Activated CD4-positive, alpha-beta T cell treated with anti-CD3 and anti-CD28 coated beads, Interleukin-2, amount 10 ng/mL, durations not matched to agents 24 days and 14 days (primary cell): ENCODE measurements at regions of chr11 and their contacts with region 1.

Region 1: DNA sequence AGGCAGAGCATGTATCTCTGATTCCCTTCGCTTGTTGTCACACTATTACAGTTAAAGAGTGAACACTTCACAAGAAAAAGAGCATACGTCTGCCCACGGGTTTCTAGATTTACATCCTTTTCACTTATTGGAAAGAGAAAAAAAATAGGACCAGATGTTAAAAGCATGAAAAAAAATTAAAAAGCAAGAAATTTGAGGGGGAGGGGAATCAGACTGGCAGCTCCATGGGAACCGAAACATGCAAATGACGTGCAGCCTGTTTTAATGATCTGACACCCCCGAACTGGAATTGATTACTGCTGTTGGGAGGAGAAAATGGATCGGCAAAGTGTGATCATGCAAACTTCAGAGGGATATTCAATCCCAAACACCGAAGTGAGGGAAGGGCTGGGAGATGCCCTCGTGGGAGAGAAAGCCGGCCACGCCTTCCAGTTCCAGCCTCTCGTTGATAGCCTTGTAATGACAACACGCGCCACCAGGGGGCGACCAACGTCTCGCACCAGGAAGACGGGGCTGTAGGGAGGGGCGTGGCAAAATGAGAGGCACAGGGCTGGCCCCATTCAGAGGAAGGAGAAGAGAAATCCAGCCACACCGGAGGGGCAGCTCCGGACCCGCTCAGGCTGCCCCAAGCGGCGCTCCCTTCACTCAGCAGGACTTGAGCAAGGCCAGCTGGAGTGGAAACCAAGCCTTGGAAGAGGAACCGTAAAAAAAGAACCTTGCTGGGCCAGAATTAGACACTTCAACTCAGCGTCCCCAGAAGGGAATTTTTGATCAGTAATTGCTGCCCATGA is 53.8 kb upstream of the SYT13 start:
- DNase-seq: peak; percentile 97
- H3K4me3 Mint-ChIP-seq: peak overlapping the region; percentile 78
- H3K27ac Mint-ChIP-seq: no peak overlapping the region
- H3K4me1 Mint-ChIP-seq: peaks cover 9% of the 10 kb centered on the region
- H3K27me3 Mint-ChIP-seq: peaks cover 28% of the 10 kb centered on the region

Region 2: DNA sequence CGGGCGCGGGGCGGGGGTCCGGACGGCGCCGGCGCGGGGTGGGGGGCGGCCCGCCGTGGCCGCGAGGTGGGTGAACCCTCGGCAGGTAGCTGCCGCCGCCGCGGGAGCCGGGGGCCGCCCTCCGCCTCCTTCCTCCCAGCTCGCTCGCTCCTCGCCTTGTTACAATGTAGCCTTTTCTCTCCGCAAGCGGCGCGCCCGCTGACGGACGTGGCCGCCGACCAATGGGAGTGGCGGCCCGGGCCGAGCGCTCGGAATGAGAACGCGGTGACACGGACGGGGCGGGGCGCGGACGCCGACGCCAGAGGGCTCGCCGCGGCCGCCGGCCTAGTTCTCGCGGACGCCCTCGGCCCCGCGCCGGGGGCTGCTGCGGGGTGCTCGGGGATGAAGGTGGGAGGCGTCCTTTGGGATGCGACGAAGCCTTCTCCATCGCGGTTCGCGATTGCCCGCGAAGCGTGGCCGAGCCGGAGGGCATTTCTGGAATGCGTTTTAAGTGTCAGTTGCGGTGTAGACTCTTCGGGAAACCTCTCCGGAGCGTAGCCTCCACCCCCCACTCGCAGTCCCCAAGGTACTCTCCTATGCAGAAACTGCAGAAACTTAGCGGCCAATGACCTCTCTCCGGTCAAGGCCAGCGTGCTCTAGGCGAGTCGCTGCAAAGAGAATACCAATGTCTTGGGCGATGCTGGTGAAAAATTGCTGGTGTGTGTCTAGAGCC is 192.8 kb before region 1 on chr11:
- intact Hi-C with region 1: loop called (anchors 1 kb)
- DNase-seq: peak; percentile 98
- H3K4me3 Mint-ChIP-seq: peak overlapping the region; percentile 82
- H3K27ac Mint-ChIP-seq: peak overlapping the region; percentile 83
- H3K4me1 Mint-ChIP-seq: peaks cover 12% of the 10 kb centered on the region
- H3K27me3 Mint-ChIP-seq: peaks cover 44% of the 10 kb centered on the region

Region 3: GRCh38 chr11:45252134-45252855 is 87.6 kb before region 1 on chr11:
- intact Hi-C with region 1: loop called (anchors 10 kb)
- DNase-seq: peak; percentile 66
- H3K4me3 Mint-ChIP-seq: no peak overlapping the region
- H3K27ac Mint-ChIP-seq: no peak overlapping the region
- H3K4me1 Mint-ChIP-seq: peaks cover 2% of the 10 kb centered on the region
- H3K27me3 Mint-ChIP-seq: peaks cover 4% of the 10 kb centered on the region

Region 4: DNA sequence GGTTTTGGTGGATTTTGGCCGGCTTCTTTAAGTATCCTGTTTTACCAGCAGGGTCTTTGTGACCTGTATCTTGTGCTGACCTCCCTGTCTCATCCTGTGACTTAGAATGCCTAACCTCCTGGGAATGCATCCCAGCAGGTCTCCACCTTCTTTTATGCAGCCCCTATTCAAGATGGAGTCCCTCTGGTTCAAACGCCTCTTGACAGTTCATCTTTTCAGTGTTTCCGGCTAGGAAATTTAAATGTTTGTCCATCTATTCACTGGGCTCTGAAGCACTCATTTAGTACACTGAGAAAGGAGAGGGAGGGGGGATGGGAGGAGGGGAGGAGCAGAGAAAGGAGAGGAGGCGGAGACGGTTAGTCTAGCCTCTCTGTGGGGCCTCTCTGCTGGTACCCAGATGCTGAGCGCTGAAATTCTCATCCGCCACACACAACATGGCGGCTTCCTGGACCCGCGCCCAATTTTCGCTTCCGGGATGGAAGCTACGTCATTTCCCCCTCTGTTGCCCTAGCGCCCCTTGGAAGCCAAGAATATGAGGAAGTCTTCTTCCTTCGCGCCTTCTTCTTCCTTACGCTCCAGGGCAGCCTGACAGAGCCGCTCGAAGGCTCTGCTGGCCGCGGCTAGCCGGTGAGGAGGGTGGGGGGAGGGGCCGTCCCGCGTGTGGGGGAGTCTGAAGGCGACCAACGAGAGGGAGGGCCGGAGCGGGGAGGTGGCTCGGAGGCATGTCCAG is 15.2 kb after region 1 on chr11:
- intact Hi-C with region 1: loop called (anchors 1 kb)
- DNase-seq: peak; percentile 96
- H3K4me3 Mint-ChIP-seq: peak overlapping the region; percentile 80
- H3K27ac Mint-ChIP-seq: peak overlapping the region; percentile 77
- H3K4me1 Mint-ChIP-seq: peaks cover 13% of the 10 kb centered on the region
- H3K27me3 Mint-ChIP-seq: peaks cover 36% of the 10 kb centered on the region

Region 5: DNA sequence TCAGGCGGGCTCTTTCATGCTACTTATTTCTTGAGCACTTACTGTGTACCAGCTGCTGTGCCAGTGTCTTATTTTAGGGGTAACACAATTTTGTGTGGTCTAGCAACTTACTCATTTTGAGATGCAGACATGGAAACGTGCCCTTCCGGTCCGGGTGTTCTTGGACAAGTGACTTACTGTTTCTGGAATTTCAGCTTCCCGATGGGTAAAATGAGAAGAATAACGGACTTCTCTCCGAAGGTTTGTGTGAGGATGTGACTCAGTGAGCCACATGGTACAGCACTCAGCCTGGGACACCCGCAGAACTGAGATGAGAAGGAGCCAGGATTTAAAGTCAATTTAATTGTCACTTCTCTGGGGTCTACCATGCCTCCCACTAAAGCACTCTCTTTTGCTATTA is 60.7 kb after region 1 on chr11:
- intact Hi-C with region 1: no loop called
- DNase-seq: no peak
- H3K4me3 Mint-ChIP-seq: no peak overlapping the region
- H3K27ac Mint-ChIP-seq: no peak overlapping the region
- H3K4me1 Mint-ChIP-seq: no peaks in the 10 kb centered on the region
- H3K27me3 Mint-ChIP-seq: peaks cover 7% of the 10 kb centered on the region